Activated B cell treated with CpG ODN at 0.5 μM for 24 hours (primary cell): ENCODE measurements at regions of chr6 and their contacts with region 1.

Region 1: DNA sequence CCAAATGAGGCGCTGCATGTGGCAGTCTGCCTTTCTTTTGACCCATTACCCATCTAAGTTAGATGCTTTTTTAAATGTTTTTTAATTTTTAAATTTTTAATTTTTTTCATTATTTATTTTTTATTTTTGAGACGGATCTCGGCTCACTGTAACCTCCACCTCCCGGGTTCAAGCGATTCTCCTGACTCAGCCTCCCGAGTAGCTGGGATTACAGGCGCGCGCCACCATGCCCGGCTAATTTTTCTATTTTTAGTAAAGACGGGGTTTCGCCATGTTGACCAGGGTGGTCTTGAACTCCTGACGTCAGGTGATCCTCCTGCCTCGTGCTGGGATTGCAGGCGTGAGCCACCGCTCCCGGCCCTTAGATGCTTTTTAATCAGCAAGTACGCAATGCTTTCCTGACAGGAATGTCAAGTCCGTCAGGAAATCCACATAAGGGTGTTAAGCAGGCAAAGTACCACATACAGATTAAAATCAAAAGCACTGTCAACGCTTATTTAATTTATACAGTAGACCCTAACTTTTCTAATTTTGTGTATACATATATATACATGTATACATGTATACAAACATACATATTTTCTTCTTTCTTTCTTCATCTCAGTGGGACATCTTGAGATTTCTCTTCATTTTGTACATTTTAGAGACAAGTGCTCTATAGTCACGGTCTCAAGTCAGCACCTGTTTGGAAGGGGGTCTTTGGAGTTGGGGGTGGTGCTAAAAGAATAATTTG is 995 bp upstream of the GSTA4 start:
- DNase-seq: peak; percentile 27
- ATAC-seq: no peak
- H3K4me3 Mint-ChIP-seq: peak overlapping the region; percentile 94
- H3K27ac Mint-ChIP-seq: peak overlapping the region; percentile 99
- H3K4me1 Mint-ChIP-seq: peaks cover 27% of the 10 kb centered on the region
- H3K27me3 Mint-ChIP-seq: peaks cover 5% of the 10 kb centered on the region
- CTCF ChIP-seq: no peak

Region 2: GRCh38 chr6:52361945-52362442 is 634.1 kb before region 1 on chr6 and contains the start of gene PAQR8:
- CTCF ChIA-PET with region 1: no interaction called
- POLR2A ChIA-PET with region 1: no interaction called
- intact Hi-C with region 1: loop called (anchors 5 kb)
- DNase-seq: peak; percentile 86
- ATAC-seq: peak; percentile 93
- H3K4me3 Mint-ChIP-seq: peak within 1 kb of the TSS; percentile 97
- H3K27ac Mint-ChIP-seq: peak within 1 kb of the TSS; percentile 86
- H3K4me1 Mint-ChIP-seq: peaks cover 25% of the 10 kb centered on the region
- H3K27me3 Mint-ChIP-seq: no peaks in the 10 kb centered on the region
- CTCF ChIP-seq: no peak
- total RNA-seq, gene PAQR8: 6.8 and 8.0 TPM in 2 replicates

Region 3: GRCh38 chr6:52670502-52671409 is 325.3 kb before region 1 on chr6 and contains the start of gene TMEM14A:
- CTCF ChIA-PET with region 1: no interaction called
- POLR2A ChIA-PET with region 1: no interaction called
- intact Hi-C with region 1: loop called (anchors 2 kb)
- DNase-seq: peak; percentile 88
- ATAC-seq: peak; percentile 97
- H3K4me3 Mint-ChIP-seq: peak within 1 kb of the TSS; percentile 86
- H3K27ac Mint-ChIP-seq: peak within 1 kb of the TSS; percentile 69
- H3K4me1 Mint-ChIP-seq: peaks cover 39% of the 10 kb centered on the region
- H3K27me3 Mint-ChIP-seq: no peaks in the 10 kb centered on the region
- CTCF ChIP-seq: no peak
- total RNA-seq, gene TMEM14A: 6.6 and 7.7 TPM in 2 replicates

Region 4: DNA sequence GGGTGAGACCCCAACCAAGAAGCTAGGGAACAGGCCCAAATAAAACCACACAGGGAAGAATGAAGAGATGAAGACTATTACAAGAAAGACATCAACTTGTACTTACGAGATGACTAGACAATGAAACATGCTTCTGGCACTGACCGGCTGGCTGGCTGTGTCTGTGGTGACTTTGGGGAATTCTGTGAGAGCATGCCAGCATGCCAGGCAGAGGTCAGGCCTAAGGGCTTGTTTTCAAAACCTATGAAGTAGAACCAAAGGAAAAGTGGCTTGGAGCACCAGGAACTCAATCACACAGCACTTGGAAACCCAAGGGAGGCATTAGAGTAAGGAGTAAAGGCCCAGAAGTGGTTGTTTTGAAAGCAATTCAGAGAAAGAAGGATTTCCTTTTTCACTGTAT is 58.2 kb before region 1 on chr6:
- CTCF ChIA-PET with region 1: no interaction called
- POLR2A ChIA-PET with region 1: no interaction called
- intact Hi-C with region 1: no loop called
- DNase-seq: no peak
- ATAC-seq: no peak
- H3K4me3 Mint-ChIP-seq: no peak overlapping the region
- H3K27ac Mint-ChIP-seq: no peak overlapping the region
- H3K4me1 Mint-ChIP-seq: no peaks in the 10 kb centered on the region
- H3K27me3 Mint-ChIP-seq: peaks cover 4% of the 10 kb centered on the region
- CTCF ChIP-seq: no peak

Region 5: GRCh38 chr6:52984247-52984646 is 11.8 kb before region 1 on chr6:
- CTCF ChIA-PET with region 1: interaction called, 3 read pairs
- POLR2A ChIA-PET with region 1: interaction called, 14 read pairs
- intact Hi-C with region 1: loop called (anchors 1 kb)
- DNase-seq: no peak
- ATAC-seq: peak; percentile 52
- H3K4me3 Mint-ChIP-seq: peak overlapping the region; percentile 58
- H3K27ac Mint-ChIP-seq: peak overlapping the region; percentile 35
- H3K4me1 Mint-ChIP-seq: peaks cover 40% of the 10 kb centered on the region
- H3K27me3 Mint-ChIP-seq: no peaks in the 10 kb centered on the region
- CTCF ChIP-seq: no peak

Region 6: DNA sequence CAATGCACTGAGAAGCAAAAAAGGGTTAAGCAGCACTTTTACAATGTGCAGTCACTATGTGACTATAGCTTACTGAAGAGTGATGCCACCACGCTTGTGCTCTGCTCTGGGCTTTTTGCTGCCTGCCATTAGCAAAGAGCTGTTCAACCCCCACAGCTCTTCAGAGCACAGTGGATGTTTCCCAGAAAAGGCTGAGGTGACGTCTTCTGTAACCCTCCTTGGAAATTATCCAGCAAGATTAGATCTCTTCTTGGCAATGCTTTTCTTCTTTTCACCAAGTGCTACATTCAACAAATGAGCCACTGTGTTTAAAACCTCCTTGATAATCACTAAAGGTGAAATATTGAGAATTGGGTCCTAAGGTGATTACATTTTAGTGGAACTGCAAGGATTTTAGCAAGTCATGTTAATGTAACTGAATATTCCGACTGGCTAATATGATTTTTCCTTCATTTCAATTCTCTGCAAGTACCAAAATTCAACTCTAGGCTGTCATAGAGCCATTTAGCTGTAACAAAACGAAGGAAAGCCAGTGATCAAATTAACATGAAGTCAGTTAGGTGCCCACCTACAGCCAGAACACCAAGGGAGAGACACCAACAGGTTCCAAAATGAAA is 317.8 kb after region 1 on chr6:
- CTCF ChIA-PET with region 1: no interaction called
- POLR2A ChIA-PET with region 1: no interaction called
- intact Hi-C with region 1: no loop called
- DNase-seq: no peak
- ATAC-seq: no peak
- H3K4me3 Mint-ChIP-seq: peak overlapping the region; percentile 3
- H3K27ac Mint-ChIP-seq: peak overlapping the region; percentile 41
- H3K4me1 Mint-ChIP-seq: peaks cover 87% of the 10 kb centered on the region
- H3K27me3 Mint-ChIP-seq: no peaks in the 10 kb centered on the region
- CTCF ChIP-seq: no peak

Region 7: DNA sequence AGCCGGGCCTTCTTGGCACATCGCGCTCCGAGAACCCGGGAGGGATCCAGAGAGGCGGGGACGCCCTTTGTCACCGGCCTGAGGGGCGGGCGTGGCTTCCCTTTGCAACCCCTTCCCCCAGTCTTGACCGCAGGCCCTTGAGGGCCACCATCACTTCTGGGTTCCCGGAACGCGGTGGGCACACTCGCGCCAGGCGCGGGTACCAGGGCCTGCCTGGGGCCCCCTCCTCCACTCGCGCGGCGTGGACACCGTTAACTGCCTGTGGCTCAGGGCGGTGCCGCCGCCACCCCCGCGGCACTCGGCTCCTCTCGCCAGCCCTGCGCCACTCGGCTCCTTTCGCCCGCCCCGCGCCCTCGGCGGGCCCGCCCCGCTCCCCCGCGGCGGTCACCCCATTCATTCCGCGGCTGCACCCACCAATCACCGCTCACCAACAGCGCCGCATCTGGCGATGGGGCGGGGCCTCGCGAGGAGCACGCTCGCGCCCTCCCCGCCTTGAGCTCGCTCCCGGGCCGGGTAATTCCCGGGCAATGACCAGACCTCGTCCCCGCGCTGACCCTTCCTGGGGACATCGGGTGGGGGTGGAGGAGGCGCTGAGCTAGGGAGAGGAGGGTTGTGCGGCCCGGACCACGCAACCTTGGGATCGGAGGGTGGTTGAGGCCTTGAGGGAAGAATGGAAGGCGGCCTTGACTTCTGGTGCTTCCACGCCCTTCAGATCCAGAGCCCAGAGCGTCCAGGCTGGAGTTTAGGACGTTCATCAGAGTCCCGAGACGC is 363.2 kb after region 1 on chr6:
- CTCF ChIA-PET with region 1: no interaction called
- POLR2A ChIA-PET with region 1: no interaction called
- intact Hi-C with region 1: loop called (anchors 5 kb)
- DNase-seq: peak; percentile 91
- ATAC-seq: peak; percentile 92
- H3K4me3 Mint-ChIP-seq: peak overlapping the region; percentile 92
- H3K27ac Mint-ChIP-seq: peak overlapping the region; percentile 99
- H3K4me1 Mint-ChIP-seq: peaks cover 59% of the 10 kb centered on the region
- H3K27me3 Mint-ChIP-seq: no peaks in the 10 kb centered on the region
- CTCF ChIP-seq: no peak

Region 8: GRCh38 chr6:53651764-53652401 is 655.8 kb after region 1 on chr6:
- CTCF ChIA-PET with region 1: no interaction called
- POLR2A ChIA-PET with region 1: no interaction called
- intact Hi-C with region 1: loop called (anchors 2 kb)
- DNase-seq: peak; percentile 63
- ATAC-seq: peak; percentile 88
- H3K4me3 Mint-ChIP-seq: peak overlapping the region; percentile 87
- H3K27ac Mint-ChIP-seq: peak overlapping the region; percentile 68
- H3K4me1 Mint-ChIP-seq: peaks cover 20% of the 10 kb centered on the region
- H3K27me3 Mint-ChIP-seq: peaks cover 4% of the 10 kb centered on the region
- CTCF ChIP-seq: no peak